Breast epithelium (tissue), 4 donors: ENCODE measurements at regions of chr20 and their contacts with region 1.

Region 1: DNA sequence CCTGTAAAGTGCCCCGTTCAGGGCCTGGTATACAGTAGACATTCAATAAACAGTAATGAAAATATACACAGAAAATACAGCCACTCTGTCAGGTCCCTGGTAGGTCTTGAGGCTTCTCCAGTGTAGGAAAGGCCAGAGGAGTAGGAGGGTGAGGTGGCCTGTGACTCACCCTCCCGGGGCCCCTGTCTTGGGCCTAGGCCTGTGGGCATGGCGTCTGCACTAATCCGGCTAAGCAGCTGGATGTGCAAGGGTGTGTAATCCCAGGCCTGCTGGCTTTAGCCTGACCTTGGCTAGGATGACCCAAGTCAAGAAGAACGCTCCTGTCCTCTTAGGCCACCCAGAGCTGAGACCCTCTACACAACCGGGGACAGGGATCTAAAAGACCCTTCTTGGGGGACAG is 84.9 kb downstream of the KCNB1 start:
- DNase-seq: no peak
- H3K4me3 ChIP-seq: no peak overlapping the region
- H3K27ac ChIP-seq: no peak overlapping the region
- H3K4me1 ChIP-seq: no peaks in the 10 kb centered on the region
- H3K27me3 ChIP-seq: no peaks in the 10 kb centered on the region
- CTCF ChIP-seq: no peak
- POLR2A ChIP-seq: no peak

Region 2: DNA sequence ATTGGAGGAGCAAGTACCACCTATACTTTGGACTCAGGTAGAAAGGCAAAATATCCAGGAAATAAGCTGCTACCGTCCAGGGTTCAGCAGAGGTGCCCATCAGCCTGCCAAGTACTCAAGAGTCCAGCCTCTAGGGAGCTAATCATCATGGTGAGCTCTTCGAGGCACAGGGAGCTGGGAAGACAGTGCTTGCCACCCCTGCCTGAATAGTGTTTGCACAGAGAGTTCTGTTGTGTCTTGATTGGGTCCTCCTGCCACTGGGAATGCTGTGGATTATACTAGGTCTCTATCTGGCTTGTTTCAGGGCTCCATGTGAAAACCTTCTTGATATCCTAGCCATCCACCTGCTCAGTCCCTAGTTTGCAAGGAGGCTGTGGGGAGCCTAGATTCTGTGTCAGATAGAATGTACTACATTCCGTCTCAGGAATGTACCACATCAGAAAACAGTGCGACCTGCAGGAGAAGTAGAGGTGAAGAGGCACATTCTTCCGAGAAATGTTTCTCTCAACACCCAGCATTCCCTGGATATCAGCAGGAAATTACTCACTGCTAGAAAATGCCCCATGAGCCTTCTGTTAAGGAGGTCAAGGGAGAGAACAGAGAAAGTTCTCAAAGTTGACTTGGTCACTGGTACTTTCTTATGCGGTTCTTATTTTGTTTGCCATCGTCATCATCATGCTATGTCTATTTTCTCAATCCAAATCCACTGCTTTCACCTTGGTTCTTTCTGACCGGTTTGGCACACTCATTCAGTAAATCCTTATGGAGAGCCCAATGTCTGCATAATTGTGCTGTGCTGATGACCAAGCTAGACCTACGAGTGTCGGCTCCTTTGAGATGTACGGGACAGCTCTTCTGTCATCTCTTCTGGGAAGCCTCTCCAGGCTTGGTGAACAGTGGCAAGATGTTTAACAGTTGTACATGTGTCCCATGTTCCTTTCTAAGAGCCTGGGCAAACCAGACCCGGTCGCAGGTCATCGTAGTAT is 1143.4 kb after region 1 on chr20:
- intact Hi-C with region 1: no loop called
- DNase-seq: no peak
- H3K4me3 ChIP-seq: no peak overlapping the region
- H3K27ac ChIP-seq: peak overlapping the region; percentile 30 to 78
- H3K4me1 ChIP-seq: peaks cover 0 to 4% of the 10 kb centered on the region in 2 donors
- H3K27me3 ChIP-seq: no peaks in the 10 kb centered on the region
- CTCF ChIP-seq: no peak
- POLR2A ChIP-seq: no peak

Region 3: GRCh38 chr20:50635667-50636503 is 1238.4 kb after region 1 on chr20:
- intact Hi-C with region 1: loop called (anchors 5 kb)
- DNase-seq: peak in 1 of 2 donors; percentile 62
- H3K4me3 ChIP-seq: peak overlapping the region in 1 of 3 donors; percentile 21
- H3K27ac ChIP-seq: peak overlapping the region in 1 of 2 donors; percentile 8
- H3K4me1 ChIP-seq: no peaks in the 10 kb centered on the region
- H3K27me3 ChIP-seq: no peaks in the 10 kb centered on the region
- CTCF ChIP-seq: peak; percentile 65 to 77 (median 70)
- POLR2A ChIP-seq: no peak